OCI-LY7 (cell line): ENCODE measurements at regions of chr11 and their contacts with region 1.

Region 1: DNA sequence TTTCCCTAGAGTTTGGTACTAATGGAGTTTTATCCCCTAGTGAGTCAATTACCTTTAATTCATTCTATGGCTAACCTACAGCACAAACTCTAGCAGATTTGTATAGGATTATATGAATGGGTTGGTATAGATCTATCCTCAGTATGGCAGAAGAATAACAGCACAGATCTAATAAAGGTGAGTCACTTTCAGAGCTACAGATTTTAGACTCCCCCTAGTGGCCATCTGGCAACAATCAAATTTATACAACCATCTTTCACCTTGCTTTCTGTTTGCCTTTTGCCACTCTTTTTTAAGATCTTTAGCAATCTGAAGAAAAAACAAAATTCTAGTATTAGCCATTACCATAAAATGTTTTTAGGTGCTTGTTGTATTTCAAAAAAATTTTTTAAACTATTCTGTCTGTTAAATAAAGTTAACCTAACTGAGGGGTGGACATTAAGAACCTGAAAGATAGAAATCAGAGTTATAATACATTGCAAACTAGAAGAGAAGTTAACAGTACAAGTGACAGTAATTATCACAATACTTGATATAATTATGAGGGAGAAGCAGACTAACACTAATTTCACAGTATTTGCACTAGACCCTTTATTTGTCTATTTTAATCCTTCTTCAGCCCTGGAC is 25.8 kb downstream of the DDIAS start:
- DNase-seq: peak; percentile 84
- H3K4me3 ChIP-seq: no peak overlapping the region
- H3K27ac ChIP-seq: peak overlapping the region; percentile 64
- H3K4me1 ChIP-seq: peaks cover 74% of the 10 kb centered on the region
- CTCF ChIP-seq: peak; percentile 99

Region 2: GRCh38 chr11:82906244-82906654 is 21.1 kb before region 1 on chr11:
- CTCF ChIA-PET with region 1: interaction called, 3 read pairs
- POLR2A ChIA-PET with region 1: interaction called, 14 read pairs
- intact Hi-C with region 1: loop called (anchors 1 kb)
- DNase-seq: peak; percentile 79
- H3K4me3 ChIP-seq: peak overlapping the region; percentile 24
- H3K27ac ChIP-seq: peak overlapping the region; percentile 13
- H3K4me1 ChIP-seq: peaks cover 78% of the 10 kb centered on the region
- CTCF ChIP-seq: peak; percentile 94

Region 3: DNA sequence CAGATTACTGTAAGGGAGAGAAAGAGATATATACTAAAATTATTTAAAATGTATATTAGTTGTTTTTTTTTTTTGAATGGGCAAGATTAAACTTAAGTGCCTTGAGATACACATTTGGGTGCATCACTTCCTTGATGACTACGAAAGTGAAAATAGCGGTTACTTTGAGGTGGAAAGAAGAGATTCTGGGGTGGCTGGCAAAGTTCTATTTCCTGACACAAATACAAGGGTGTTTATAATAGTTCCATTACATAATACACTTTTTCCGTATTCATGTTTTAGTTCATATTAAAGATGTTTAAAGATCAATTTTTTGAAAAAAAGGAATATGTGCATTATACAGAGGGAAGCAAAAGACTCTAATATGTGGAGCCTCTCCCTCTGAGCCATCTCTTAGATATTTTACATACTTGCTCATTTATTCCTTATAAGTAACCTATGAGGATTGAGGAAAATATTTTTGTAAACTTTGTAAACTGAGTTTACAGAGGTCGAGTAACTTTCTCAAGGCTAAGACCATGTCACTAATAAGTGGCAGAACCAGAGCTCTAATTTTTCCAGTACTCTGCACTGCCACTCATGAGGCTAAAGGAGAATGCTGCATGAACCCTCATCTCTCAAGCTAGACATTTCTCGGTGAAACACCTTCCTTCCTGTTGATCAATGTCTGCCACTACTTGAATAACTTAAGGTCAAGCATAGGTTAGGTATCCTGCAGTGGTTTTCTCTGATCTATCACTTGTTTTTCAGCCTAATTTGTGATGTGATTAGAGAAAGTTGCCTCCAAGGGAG is 32.8 kb after region 1 on chr11:
- CTCF ChIA-PET with region 1: no interaction called
- POLR2A ChIA-PET with region 1: interaction called, 23 read pairs
- intact Hi-C with region 1: loop called (anchors 2 kb)
- DNase-seq: peak; percentile 81
- H3K4me3 ChIP-seq: peak overlapping the region; percentile 54
- H3K27ac ChIP-seq: peak overlapping the region; percentile 89
- H3K4me1 ChIP-seq: peaks cover 66% of the 10 kb centered on the region
- CTCF ChIP-seq: no peak

Region 4: GRCh38 chr11:83063073-83063754 is 135.8 kb after region 1 on chr11:
- CTCF ChIA-PET with region 1: no interaction called
- POLR2A ChIA-PET with region 1: interaction called, 10 read pairs
- intact Hi-C with region 1: loop called (anchors 2 kb)
- DNase-seq: peak; percentile 96
- H3K4me3 ChIP-seq: peak overlapping the region; percentile 62
- H3K27ac ChIP-seq: peak overlapping the region; percentile 100
- H3K4me1 ChIP-seq: peaks cover 95% of the 10 kb centered on the region
- CTCF ChIP-seq: no peak

Region 5: GRCh38 chr11:83285771-83286528 is 358.6 kb after region 1 on chr11 and contains the start of gene CCDC90B:
- CTCF ChIA-PET with region 1: no interaction called
- POLR2A ChIA-PET with region 1: no interaction called
- intact Hi-C with region 1: loop called (anchors 5 kb)
- DNase-seq: peak; percentile 98
- H3K4me3 ChIP-seq: peak within 1 kb of the TSS; percentile 76
- H3K27ac ChIP-seq: peak within 1 kb of the TSS; percentile 76
- H3K4me1 ChIP-seq: peaks cover 60% of the 10 kb centered on the region
- CTCF ChIP-seq: no peak
- total RNA-seq, gene CCDC90B: 39.3 and 54.9 TPM in 2 replicates